Activated naive CD4-positive, alpha-beta T cell treated with anti-CD3 and anti-CD28 coated beads for 36 hours (primary cell): ENCODE measurements at regions of chr5 and their contacts with region 1.

Region 1: DNA sequence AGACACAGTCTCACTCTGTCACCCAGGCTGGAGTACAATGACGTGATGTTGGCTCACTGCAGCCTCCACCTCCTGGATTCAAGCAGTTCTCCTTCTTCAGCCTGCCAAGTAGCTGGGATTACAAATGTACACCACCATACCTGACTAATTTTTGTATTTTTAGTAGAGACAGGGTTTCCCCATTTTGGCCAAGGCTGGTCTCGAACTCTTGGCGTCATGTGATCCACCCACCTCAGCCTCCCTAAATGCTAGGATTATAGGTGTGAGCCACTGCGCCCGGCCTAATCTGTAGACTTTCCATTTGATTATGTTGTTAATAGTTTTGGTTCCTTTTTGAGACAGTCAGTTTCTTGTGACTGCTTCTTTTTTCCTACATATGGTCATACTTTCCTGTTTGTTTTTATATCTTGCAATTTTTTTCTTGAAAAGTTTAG is 31.0 kb downstream of the MTREX start:
- DNase-seq: peak; percentile 76
- H3K4me3 Mint-ChIP-seq: no peak overlapping the region
- H3K27ac Mint-ChIP-seq: peak overlapping the region; percentile 21
- H3K4me1 Mint-ChIP-seq: peaks cover 27% of the 10 kb centered on the region
- H3K27me3 Mint-ChIP-seq: no peaks in the 10 kb centered on the region

Region 2: DNA sequence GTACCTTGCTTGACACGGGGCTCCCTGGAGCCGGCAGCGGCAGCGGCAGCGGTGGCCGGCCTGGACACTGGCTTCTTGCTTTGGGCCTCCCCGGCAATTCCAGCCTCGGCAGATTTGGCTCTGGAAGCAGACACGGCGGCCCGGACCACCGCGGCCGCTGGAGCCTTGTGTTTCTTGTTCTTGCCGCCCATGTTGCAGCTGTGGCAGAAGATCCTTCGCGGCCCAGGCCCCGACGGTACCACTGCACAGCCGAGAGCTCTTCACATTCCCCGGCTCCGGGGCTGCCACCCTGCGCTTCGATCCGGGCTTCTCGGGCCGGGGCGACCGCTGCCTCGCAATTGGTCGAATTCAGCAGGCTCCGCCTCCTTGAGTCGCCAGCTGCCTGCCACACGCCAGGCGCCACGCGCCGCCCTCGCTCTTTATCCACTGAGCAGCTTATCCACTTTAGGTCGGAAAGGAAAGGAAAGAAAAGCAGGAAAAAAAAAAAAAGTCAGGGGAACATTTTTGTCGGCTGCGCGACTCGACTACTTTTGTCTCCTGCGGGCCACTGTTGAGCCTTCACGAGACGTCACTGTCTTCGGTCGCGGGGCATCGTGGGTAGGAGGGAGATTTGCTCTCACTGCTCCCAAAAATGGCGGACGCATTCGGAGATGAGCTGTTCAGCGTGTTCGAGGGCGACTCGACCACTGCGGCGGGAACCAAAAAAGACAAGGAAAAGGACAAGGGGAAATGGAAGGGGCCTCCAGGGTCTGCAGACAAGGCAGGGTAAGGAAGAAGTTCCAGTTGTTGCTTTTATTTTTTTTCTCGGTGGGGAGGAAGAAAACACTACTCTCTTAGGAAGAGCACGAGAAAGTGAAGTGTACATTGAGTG is 31.2 kb before region 1 on chr5 and contains the starts of genes DHX29 and MTREX:
- CTCF ChIA-PET with region 1: no interaction called
- intact Hi-C with region 1: loop called (anchors 2 kb)
- DNase-seq: peak; percentile 94
- H3K4me3 Mint-ChIP-seq: no peak within 1 kb of the TSS
- H3K27ac Mint-ChIP-seq: no peak within 1 kb of the TSS
- H3K4me1 Mint-ChIP-seq: peaks cover 33% of the 10 kb centered on the region
- H3K27me3 Mint-ChIP-seq: no peaks in the 10 kb centered on the region
- total RNA-seq, gene DHX29: 11.0 to 11.1 TPM
- total RNA-seq, gene MTREX: 76.1 to 79.7 TPM

Region 3: GRCh38 chr5:55402199-55402598 is 63.4 kb after region 1 on chr5:
- CTCF ChIA-PET with region 1: no interaction called
- intact Hi-C with region 1: no loop called
- DNase-seq: no peak
- H3K4me3 Mint-ChIP-seq: no peak overlapping the region
- H3K27ac Mint-ChIP-seq: no peak overlapping the region
- H3K4me1 Mint-ChIP-seq: no peaks in the 10 kb centered on the region
- H3K27me3 Mint-ChIP-seq: no peaks in the 10 kb centered on the region

Region 4: DNA sequence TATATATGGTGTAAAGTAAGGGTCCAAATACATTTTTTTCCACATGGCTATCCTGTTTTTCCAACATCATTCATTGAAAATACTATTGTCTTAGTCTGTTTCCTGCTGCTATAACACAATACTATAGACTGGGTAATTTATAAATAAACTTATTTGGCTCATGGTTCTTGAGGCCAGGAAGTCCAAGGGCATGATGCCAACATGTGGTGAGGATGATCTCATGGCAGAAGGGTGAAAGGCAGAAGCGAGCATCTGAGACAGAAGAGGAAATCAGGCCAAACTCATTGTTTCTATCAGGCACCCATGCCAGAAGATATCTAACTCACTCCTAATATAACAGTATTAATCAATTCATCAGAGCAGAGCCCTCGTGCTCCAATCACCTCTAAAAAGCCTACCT is 851.7 kb after region 1 on chr5:
- CTCF ChIA-PET with region 1: no interaction called
- intact Hi-C with region 1: loop called (anchors 5 kb)
- DNase-seq: peak; percentile 64
- H3K4me3 Mint-ChIP-seq: no peak overlapping the region
- H3K27ac Mint-ChIP-seq: no peak overlapping the region
- H3K4me1 Mint-ChIP-seq: peaks cover 22% of the 10 kb centered on the region
- H3K27me3 Mint-ChIP-seq: no peaks in the 10 kb centered on the region